ENCODE measurements at regions of chr2 and their contacts with region 1.

Region 1: DNA sequence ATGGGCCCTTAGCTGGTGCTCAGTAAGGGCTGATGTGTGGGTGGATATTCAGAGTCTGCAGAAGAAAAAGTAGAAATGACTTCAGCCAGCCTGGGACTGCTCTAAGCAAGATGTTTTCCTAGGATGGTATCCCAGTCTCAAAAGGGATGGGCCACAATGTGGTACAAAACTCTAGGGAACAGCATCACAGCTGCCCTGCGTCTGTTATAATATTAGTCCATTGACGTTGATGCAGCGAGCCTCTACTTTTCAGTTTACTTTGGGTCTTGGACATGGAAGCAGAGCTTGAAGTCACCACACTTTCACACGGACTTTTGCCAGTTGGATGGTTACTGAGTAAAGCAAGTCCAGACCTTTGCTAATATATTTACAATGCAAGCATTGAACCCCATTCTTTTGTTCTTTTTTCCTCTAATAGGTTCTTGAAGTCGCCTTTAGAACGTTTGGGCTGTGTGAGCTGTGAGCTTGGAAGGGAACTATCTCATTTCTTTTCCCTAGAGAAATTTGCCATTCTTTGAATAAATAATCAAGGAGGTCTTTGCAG is 105.7 kb downstream of the RDH14 start:
- DNase-seq: no peak
- H3K4me3 ChIP-seq: no peak overlapping the region
- CTCF ChIP-seq: no peak
- POLR2A ChIP-seq: no peak

Region 2: GRCh38 chr2:18271370-18272147 is 183.2 kb before region 1 on chr2:
- intact Hi-C with region 1: no loop called
- DNase-seq: no peak
- H3K4me3 ChIP-seq: no peak overlapping the region
- CTCF ChIP-seq: no peak
- POLR2A ChIP-seq: no peak

Region 3: DNA sequence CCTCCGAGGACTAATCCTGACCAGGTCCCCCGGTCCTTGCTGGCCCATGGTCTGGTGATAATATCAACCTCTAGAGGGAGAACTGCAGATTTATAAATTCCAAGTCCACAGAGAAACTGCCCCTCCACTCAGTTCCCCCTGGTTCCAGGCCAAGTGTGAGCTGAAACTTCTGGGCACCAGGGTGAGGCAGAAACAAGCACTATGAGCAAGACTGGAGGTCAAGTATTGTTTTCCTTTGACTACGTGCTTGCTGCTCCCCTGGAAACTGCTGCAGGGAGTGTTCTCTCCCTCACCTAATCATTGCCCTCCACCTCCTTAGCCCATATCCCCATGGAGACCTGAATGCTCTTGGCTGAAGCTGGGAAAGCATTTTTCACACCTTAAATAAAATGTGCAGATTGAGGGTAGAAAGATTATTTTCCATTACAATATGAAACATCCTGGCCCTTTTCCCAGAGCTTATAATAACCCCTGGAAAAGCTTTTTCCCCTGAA is 29.5 kb before region 1 on chr2:
- intact Hi-C with region 1: no loop called
- DNase-seq: no peak
- H3K4me3 ChIP-seq: no peak overlapping the region
- CTCF ChIP-seq: no peak
- POLR2A ChIP-seq: no peak

Region 4: DNA sequence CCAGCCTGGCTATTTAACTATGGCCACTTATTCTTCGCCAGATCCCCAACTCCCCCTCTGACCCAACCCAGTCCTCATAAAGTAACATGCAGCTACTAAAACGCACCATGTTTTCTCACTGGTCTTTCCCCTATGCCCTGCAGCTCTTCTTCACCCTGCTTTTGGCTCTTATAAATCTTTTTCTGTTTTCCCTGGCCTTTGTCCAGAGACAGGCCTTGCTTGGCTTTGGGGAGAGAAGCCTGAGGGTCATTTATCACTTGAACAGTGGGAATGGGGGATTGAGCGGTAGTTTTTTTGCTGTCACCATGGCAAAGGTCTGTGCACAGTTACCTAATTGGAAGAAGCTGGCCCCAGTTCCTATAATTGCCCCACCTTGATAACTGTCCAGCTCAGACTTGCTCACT is 337.5 kb after region 1 on chr2:
- intact Hi-C with region 1: no loop called
- DNase-seq: no peak
- H3K4me3 ChIP-seq: no peak overlapping the region
- CTCF ChIP-seq: no peak
- POLR2A ChIP-seq: no peak

Region 5: DNA sequence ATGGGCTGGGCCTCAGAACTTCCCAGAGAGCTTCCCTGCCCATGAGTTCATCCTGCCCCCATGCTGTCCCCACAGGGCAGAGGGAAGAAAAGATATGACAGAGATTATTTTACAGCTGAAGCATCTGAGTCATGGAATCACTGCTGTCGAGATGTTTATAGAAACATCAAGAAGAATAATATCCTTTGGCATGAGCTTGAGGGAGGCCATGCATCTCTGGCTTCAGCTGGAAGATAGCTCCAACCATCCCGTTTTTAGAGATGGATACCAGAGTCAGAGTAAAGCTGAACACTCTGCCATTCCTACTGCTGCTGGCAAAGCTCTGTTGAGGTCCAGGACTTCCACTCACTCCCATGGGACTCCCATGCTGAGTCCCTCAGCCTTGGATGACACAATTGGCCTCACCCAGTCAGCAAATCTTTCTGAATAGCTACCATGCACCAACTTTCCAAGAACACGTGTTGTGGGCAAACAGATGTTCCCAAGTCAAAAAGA is 1279.2 kb after region 1 on chr2:
- intact Hi-C with region 1: loop called (anchors 5 kb)
- DNase-seq: peak in 1 of 2 donors; percentile 62
- H3K4me3 ChIP-seq: no peak overlapping the region
- CTCF ChIP-seq: no peak
- POLR2A ChIP-seq: no peak

Measured in lower leg skin (tissue), 4 donors.